CD4-positive, alpha-beta memory T cell (primary cell): ENCODE measurements at regions of chr12 and their contacts with region 1.

Region 1: DNA sequence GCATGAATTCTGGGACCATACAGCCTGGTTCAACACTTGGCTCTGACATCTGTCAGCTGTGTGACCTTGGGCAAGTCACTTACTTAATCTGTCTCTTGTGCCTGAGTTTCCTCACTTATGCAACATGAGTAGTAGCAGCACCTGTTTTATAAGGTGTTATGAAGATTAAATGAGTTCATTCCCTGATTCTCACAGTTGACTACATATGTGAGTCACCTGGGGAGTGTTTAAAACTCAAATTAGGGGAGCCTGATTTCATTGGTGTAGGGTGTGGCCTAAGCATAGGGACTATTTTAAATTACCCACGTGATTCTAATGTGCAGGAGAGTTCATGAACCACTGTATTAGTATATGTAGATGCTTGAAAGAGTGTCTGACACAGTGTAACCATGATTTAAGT is 36.7 kb upstream of the TMEM233 start:
- DNase-seq: no peak
- H3K4me3 ChIP-seq: no peak overlapping the region
- H3K4me3 Mint-ChIP-seq: no peak overlapping the region
- H3K27ac ChIP-seq: no peak overlapping the region
- H3K27ac Mint-ChIP-seq: no peak overlapping the region
- H3K4me1 ChIP-seq: no peaks in the 10 kb centered on the region
- H3K4me1 Mint-ChIP-seq: no peaks in the 10 kb centered on the region
- H3K27me3 ChIP-seq: no peaks in the 10 kb centered on the region
- H3K27me3 Mint-ChIP-seq: peaks cover 11 to 14% of the 10 kb centered on the region in 2 donors

Region 2: GRCh38 chr12:119334430-119335170 is 222.3 kb before region 1 on chr12 and contains the start of gene CCDC60:
- CTCF ChIA-PET with region 1: no interaction called
- POLR2A ChIA-PET with region 1: no interaction called
- intact Hi-C with region 1: no loop called
- DNase-seq: no peak
- H3K4me3 ChIP-seq: no peak within 1 kb of the TSS
- H3K4me3 Mint-ChIP-seq: no peak within 1 kb of the TSS
- H3K27ac ChIP-seq: no peak within 1 kb of the TSS
- H3K27ac Mint-ChIP-seq: no peak within 1 kb of the TSS
- H3K4me1 ChIP-seq: no peaks in the 10 kb centered on the region
- H3K4me1 Mint-ChIP-seq: no peaks in the 10 kb centered on the region
- H3K27me3 ChIP-seq: no peaks in the 10 kb centered on the region
- H3K27me3 Mint-ChIP-seq: peaks cover 7 to 8% of the 10 kb centered on the region in 2 donors
- total RNA-seq, gene CCDC60: not detected

Region 3: GRCh38 chr12:119544765-119545625 is 11.9 kb before region 1 on chr12:
- CTCF ChIA-PET with region 1: interaction called, 14 read pairs
- POLR2A ChIA-PET with region 1: no interaction called
- intact Hi-C with region 1: no loop called
- DNase-seq: peak; percentile 38 to 54 (median 42)
- H3K4me3 ChIP-seq: no peak overlapping the region
- H3K4me3 Mint-ChIP-seq: no peak overlapping the region
- H3K27ac ChIP-seq: no peak overlapping the region
- H3K27ac Mint-ChIP-seq: no peak overlapping the region
- H3K4me1 ChIP-seq: no peaks in the 10 kb centered on the region
- H3K4me1 Mint-ChIP-seq: no peaks in the 10 kb centered on the region
- H3K27me3 ChIP-seq: no peaks in the 10 kb centered on the region
- H3K27me3 Mint-ChIP-seq: peaks cover 36 to 42% of the 10 kb centered on the region in 2 donors